AG04449 (cell line): ENCODE measurements at regions of chr2 and their contacts with region 1.

Region 1: GRCh38 chr2:199303728-199304177 is 154.0 kb downstream of the SATB2 start:
- DNase-seq: peak; percentile 95
- H3K4me3 ChIP-seq: no peak overlapping the region; the same call in 1 of the 2 replicates
- CTCF ChIP-seq: no peak

Region 2: DNA sequence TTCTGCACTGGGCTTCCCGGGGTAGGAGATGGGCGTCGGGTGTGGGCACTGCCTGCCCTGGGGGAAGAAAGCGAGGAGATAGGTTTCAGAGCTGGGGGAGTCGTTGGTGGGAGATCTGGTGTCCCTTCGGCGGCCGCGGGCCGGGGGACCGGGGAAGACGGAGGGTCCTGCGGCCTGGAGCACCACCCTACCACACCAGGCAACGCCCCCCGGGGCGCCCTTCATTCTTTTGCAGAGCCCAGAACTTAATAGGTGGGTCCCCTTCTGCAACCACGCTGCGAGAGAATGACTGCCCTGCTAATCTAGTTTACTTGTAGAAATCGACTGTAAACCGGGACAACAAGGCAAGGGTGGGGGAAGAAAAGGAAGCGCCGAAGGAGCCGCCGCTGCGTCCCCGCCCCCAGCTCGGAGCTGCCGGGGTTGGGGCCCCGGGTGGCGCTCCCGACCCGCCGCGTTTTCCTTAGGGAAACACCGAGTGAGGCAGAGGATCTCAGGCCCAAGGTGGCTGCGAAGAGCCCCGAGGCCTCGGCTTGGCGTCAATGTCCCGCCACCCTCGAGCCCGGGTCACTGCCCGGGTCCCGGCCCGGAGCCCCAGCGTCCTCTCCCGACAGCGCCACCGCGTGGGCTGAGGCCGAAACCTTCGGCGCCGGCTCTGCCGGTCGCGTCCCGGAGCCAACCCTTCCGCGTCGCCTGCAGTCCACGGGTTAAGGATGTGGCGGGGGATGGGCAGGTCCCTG is 159.4 kb after region 1 on chr2:
- CTCF ChIA-PET with region 1: interaction called, 10 read pairs
- POLR2A ChIA-PET with region 1: no interaction called
- DNase-seq: no peak
- H3K4me3 ChIP-seq: peak overlapping the region; percentile 67
- CTCF ChIP-seq: peak; percentile 96